Naive thymus-derived CD4-positive, alpha-beta T cell (primary cell): ENCODE measurements at regions of chr14 and their contacts with region 1.

Region 1: GRCh38 chr14:50726372-50727107 is 58.4 kb upstream of the SAV1 start:
- DNase-seq: peak in 5 of 9 donors; percentile 16 to 50 (median 37)
- ATAC-seq: peak; percentile 66
- H3K4me3 ChIP-seq: no peak overlapping the region
- H3K4me3 Mint-ChIP-seq: peak overlapping the region in 7 of 10 donors; percentile 0 to 87 (median 26)
- H3K27ac ChIP-seq: peak overlapping the region; percentile 32
- H3K27ac Mint-ChIP-seq: peak overlapping the region; percentile 57 to 97 (median 79)
- H3K4me1 ChIP-seq: peaks cover 10 to 19% of the 10 kb centered on the region in 2 donors
- H3K4me1 Mint-ChIP-seq: peaks cover 11 to 39% (median 29%) of the 10 kb centered on the region in 7 donors
- H3K27me3 ChIP-seq: no peaks in the 10 kb centered on the region
- H3K27me3 Mint-ChIP-seq: no peaks in the 10 kb centered on the region

Region 2: GRCh38 chr14:50554431-50554996 is 172.0 kb before region 1 on chr14:
- CTCF ChIA-PET with region 1: no interaction called
- POLR2A ChIA-PET with region 1: no interaction called
- intact Hi-C with region 1: no loop called
- DNase-seq: no peak
- ATAC-seq: no peak
- H3K4me3 ChIP-seq: no peak overlapping the region
- H3K4me3 Mint-ChIP-seq: no peak overlapping the region
- H3K27ac ChIP-seq: no peak overlapping the region
- H3K27ac Mint-ChIP-seq: no peak overlapping the region
- H3K4me1 ChIP-seq: peaks cover 0 to under 1% of the 10 kb centered on the region in 2 donors
- H3K4me1 Mint-ChIP-seq: peaks cover 0 to 21% (median 9%) of the 10 kb centered on the region in 7 donors
- H3K27me3 ChIP-seq: peaks cover 0 to 15% of the 10 kb centered on the region in 2 donors
- H3K27me3 Mint-ChIP-seq: peaks cover 53 to 87% (median 69%) of the 10 kb centered on the region in 5 donors

Region 3: DNA sequence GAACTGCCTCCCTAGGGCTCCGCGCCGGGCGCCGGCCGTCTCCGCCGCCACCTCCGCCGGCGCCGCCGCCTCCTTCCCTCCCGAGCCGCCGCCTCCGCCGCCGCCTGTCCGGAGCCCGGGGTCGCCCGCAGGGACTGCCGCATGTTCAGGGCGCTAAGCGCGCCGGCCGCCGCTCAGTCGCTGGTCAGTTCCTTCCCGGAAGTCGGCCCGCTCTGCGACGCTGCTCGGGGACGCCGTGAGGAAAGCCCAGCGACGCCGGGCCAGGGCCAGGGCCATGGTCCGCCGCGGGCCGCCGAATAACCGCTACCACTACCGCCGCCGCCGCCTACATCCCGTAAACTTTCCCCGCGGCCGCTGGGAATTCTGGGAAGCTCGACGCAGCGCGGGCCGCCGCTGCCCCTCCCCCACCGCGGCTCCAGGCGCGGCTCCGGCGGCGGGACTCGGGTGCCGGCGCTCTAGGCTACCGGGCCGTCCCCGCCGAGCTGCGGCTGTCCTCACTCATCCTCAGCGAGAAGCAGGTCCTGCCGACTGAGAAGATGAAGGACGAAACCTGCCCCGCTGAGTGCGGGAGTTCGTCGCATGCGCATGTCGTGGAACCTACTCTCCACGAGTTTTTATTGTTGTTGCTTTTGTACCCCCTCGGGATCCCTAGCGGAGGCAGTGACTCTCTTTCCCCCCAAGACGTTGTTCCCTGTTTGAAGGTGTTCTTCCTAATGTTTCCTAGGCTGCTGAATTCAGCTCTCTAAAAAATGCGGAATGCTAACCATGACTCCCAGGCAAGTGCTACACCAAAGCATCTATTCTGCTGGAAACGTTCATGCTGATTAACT is 58.3 kb before region 1 on chr14 and contains the start of gene SAV1:
- CTCF ChIA-PET with region 1: no interaction called
- POLR2A ChIA-PET with region 1: no interaction called
- intact Hi-C with region 1: loop called in 1 of 2 experiments (anchors 5 kb)
- DNase-seq: peak; percentile 18 to 65 (median 35)
- ATAC-seq: peak; percentile 59
- H3K4me3 ChIP-seq: peak within 1 kb of the TSS; percentile 84
- H3K4me3 Mint-ChIP-seq: peak within 1 kb of the TSS in 2 of 10 donors; percentile 92 to 95
- H3K27ac ChIP-seq: peak within 1 kb of the TSS; percentile 65
- H3K27ac Mint-ChIP-seq: peak within 1 kb of the TSS in 6 of 9 donors; percentile 54 to 94 (median 88)
- H3K4me1 ChIP-seq: peaks cover 0 to 10% of the 10 kb centered on the region in 2 donors
- H3K4me1 Mint-ChIP-seq: peaks cover 11 to 23% (median 20%) of the 10 kb centered on the region in 7 donors
- H3K27me3 ChIP-seq: no peaks in the 10 kb centered on the region
- H3K27me3 Mint-ChIP-seq: peaks cover 0 to 7% (median 0%) of the 10 kb centered on the region in 5 donors
- total RNA-seq, gene SAV1: 7.2 to 9.4 (median 8.7) TPM

Region 4: DNA sequence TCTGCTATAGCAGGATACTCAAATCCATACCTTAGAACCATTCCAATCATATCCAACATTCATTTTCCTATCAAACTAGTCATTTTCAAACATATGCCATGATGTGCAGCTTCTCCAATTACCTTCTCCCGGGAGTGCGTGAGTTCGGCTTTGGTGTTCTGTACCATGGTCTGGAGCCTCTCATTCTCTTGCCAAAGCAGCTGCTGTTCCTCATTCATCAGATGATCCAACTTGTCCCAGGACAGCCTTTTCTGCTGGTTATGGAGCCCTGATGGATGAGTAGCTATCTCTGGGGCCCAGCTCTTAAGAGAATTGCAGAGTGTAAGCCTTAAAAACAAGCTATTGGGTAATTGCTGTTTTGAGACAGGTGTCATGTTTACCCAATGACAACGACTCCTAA is 12.6 kb after region 1 on chr14:
- CTCF ChIA-PET with region 1: no interaction called
- POLR2A ChIA-PET with region 1: no interaction called
- intact Hi-C with region 1: loop called in 1 of 2 experiments (anchors 1 kb)
- DNase-seq: no peak
- ATAC-seq: no peak
- H3K4me3 ChIP-seq: no peak overlapping the region
- H3K4me3 Mint-ChIP-seq: no peak overlapping the region
- H3K27ac ChIP-seq: no peak overlapping the region
- H3K27ac Mint-ChIP-seq: peak overlapping the region in 5 of 9 donors; percentile 36 to 77 (median 54)
- H3K4me1 ChIP-seq: peaks cover 0 to 6% of the 10 kb centered on the region in 2 donors
- H3K4me1 Mint-ChIP-seq: peaks cover 0 to 43% (median 4%) of the 10 kb centered on the region in 7 donors
- H3K27me3 ChIP-seq: no peaks in the 10 kb centered on the region
- H3K27me3 Mint-ChIP-seq: no peaks in the 10 kb centered on the region